ENCODE measurements at regions of chr7 and their contacts with region 1.

Region 1: GRCh38 chr7:82044497-82045080 is 274.7 kb upstream of the HGF start:
- DNase-seq: peak; percentile 40
- H3K4me3 ChIP-seq: no peak overlapping the region
- H3K27ac ChIP-seq: no peak overlapping the region
- H3K4me1 ChIP-seq: no peaks in the 10 kb centered on the region
- H3K27me3 ChIP-seq: no peaks in the 10 kb centered on the region
- CTCF ChIP-seq: peak; percentile 51 to 76 (median 71)
- POLR2A ChIP-seq: no peak

Region 2: DNA sequence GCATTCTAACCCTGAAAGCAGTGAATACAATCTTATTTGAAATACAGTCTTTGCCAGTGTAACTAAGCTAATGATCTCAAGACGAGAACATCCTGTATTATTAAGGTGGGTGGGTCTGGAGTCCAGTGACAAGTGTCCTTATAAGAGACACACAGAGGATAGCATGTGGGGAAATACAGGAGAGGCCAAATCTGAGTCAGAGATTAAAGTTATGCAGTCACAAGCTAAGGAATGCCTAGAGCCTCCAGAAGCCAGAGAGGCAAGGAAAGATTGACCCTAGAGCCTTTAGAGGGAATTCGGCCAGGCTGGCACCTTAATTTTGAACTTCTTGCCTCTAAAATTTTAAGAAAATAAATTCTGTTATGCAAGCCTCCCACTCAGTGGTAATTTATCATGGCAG is 187.2 kb before region 1 on chr7:
- intact Hi-C with region 1: no loop called
- DNase-seq: no peak
- H3K4me3 ChIP-seq: no peak overlapping the region
- H3K27ac ChIP-seq: no peak overlapping the region
- H3K4me1 ChIP-seq: no peaks in the 10 kb centered on the region
- H3K27me3 ChIP-seq: no peaks in the 10 kb centered on the region
- CTCF ChIP-seq: no peak
- POLR2A ChIP-seq: no peak

Region 3: GRCh38 chr7:82122275-82122674 is 77.7 kb after region 1 on chr7:
- intact Hi-C with region 1: no loop called
- DNase-seq: no peak
- H3K4me3 ChIP-seq: no peak overlapping the region
- H3K27ac ChIP-seq: no peak overlapping the region
- H3K4me1 ChIP-seq: no peaks in the 10 kb centered on the region
- H3K27me3 ChIP-seq: no peaks in the 10 kb centered on the region
- CTCF ChIP-seq: no peak
- POLR2A ChIP-seq: no peak

Region 4: GRCh38 chr7:82234457-82235049 is 190.0 kb after region 1 on chr7:
- intact Hi-C with region 1: loop called (anchors 10 kb)
- DNase-seq: peak; percentile 10
- H3K4me3 ChIP-seq: no peak overlapping the region
- H3K27ac ChIP-seq: no peak overlapping the region
- H3K4me1 ChIP-seq: no peaks in the 10 kb centered on the region
- H3K27me3 ChIP-seq: no peaks in the 10 kb centered on the region
- CTCF ChIP-seq: peak; percentile 39 to 70 (median 64)
- POLR2A ChIP-seq: no peak

Region 5: GRCh38 chr7:82244947-82245517 is 200.4 kb after region 1 on chr7:
- intact Hi-C with region 1: no loop called
- DNase-seq: no peak
- H3K4me3 ChIP-seq: no peak overlapping the region
- H3K27ac ChIP-seq: no peak overlapping the region
- H3K4me1 ChIP-seq: no peaks in the 10 kb centered on the region
- H3K27me3 ChIP-seq: no peaks in the 10 kb centered on the region
- CTCF ChIP-seq: no peak
- POLR2A ChIP-seq: no peak

Region 6: GRCh38 chr7:82481499-82482097 is 437.0 kb after region 1 on chr7:
- intact Hi-C with region 1: loop called (anchors 10 kb)
- DNase-seq: no peak
- H3K4me3 ChIP-seq: no peak overlapping the region
- H3K27ac ChIP-seq: no peak overlapping the region
- H3K4me1 ChIP-seq: no peaks in the 10 kb centered on the region
- H3K27me3 ChIP-seq: no peaks in the 10 kb centered on the region
- CTCF ChIP-seq: peak; percentile 14 to 68 (median 60)
- POLR2A ChIP-seq: no peak

Region 7: GRCh38 chr7:82572195-82572880 is 527.7 kb after region 1 on chr7:
- intact Hi-C with region 1: loop called (anchors 5 kb)
- DNase-seq: peak; percentile 86
- H3K4me3 ChIP-seq: no peak overlapping the region
- H3K27ac ChIP-seq: no peak overlapping the region
- H3K4me1 ChIP-seq: no peaks in the 10 kb centered on the region
- H3K27me3 ChIP-seq: no peaks in the 10 kb centered on the region
- CTCF ChIP-seq: peak; percentile 63 to 95 (median 82)
- POLR2A ChIP-seq: no peak

Region 8: DNA sequence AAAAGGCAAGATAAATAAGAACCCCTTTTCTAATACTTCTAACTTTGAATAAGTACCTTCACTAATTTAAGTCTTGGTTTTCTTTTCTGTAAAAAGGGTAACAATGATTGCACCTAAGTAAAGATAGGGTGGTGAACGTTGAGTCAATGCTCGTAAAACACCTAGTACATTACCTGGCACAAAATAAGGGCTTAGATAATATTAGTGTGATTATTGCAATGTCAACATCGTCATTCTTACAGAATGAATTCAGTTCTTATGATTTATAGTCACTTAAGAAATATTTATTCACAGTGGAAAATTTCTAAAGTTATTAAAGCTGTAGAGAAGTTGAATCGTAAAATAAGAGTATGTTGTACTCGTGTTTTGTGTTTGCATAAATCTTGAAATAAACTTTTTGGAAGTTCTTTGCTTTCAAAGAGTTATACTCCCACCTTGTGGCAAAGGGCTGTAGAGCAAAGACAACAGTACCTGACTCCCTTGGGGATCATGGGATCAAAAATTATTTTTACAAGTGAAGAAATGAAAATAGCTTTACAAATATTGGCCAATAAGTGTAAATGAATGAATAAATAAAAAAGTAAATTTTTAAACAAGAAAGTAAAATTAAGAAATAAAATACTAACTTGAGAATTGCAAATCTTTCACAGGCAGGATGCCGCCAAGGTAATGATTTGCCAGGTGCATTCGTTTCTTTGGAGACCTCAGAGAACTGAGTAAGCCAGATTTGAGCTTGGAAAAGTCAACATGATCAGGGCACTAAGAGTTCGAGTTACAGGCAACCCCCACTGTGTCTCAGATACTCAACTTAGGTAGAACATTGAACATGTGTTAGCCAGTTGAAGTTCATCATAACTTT is 684.8 kb after region 1 on chr7:
- intact Hi-C with region 1: loop called (anchors 10 kb)
- DNase-seq: peak; percentile 12
- H3K4me3 ChIP-seq: no peak overlapping the region
- H3K27ac ChIP-seq: no peak overlapping the region
- H3K4me1 ChIP-seq: no peaks in the 10 kb centered on the region
- H3K27me3 ChIP-seq: no peaks in the 10 kb centered on the region
- CTCF ChIP-seq: peak in 3 of 4 experiments; percentile 37 to 68 (median 66)
- POLR2A ChIP-seq: no peak

Measured in prostate gland (tissue), 2 donors.